AG04449 (cell line): ENCODE measurements at regions of chr1 and their contacts with region 1.

Region 1: GRCh38 chr1:157369808-157370521 is 182.3 kb downstream of the FCRL5 start:
- DNase-seq: no peak
- H3K4me3 ChIP-seq: no peak overlapping the region
- CTCF ChIP-seq: peak; percentile 66

Region 2: DNA sequence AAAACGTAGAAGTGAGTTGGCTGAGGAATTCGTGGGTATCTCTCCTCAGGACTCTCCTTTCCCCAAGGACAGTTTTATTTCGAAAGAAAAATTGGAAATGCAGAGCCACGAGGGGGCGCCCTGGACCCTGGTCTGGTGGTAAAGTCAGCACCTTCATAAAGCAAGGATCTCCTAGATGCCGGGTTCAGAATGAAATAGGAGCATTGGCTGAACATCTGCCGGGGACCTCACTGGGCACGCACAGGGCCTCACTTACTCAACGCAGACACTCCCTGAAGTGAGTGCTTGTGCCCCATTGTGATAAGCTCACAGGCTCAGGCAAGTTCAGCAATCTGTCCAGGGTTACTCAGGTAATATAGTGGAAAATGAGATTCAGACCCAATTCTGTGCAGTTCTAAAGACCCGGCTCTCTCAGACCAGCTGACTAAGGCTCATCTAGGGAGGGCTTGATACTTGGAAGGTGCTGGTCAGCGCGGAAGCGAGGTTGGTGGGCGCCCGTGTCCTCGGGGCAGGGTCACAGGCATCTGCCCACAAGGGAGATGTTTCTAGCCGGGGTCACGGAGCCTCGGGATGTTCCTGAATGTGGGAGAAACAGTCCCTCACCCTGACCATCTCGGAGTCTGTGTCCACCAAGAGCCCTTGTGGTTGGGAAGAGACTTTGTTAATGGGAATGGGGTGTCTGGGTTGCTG is 176.1 kb before region 1 on chr1:
- CTCF ChIA-PET with region 1: interaction called, 11 read pairs
- POLR2A ChIA-PET with region 1: no interaction called
- DNase-seq: no peak
- H3K4me3 ChIP-seq: no peak overlapping the region
- CTCF ChIP-seq: peak; percentile 75

Region 3: DNA sequence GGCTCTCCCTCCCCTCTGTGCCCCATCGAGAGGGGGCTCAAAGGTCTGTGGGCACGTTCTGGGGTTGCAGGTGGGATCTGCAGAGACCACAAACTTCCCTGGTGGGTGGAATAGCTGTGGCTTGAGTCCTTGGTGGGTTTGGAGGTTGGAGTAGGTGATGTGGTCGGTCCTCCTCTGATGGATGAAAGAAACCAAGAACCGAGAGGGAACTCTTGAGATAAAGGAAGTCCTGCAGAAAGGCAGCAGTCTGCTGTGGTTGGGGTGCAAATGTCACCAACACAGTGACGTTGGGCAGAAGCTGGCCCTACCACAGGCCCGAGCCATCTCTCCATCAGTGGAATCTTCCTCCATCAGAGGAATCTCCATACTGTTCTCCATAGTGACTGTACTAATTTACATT is 10.6 kb after region 1 on chr1:
- CTCF ChIA-PET with region 1: interaction called, 17 read pairs
- POLR2A ChIA-PET with region 1: no interaction called
- DNase-seq: no peak
- H3K4me3 ChIP-seq: no peak overlapping the region
- CTCF ChIP-seq: no peak

Region 4: GRCh38 chr1:157490467-157491165 is 120.7 kb after region 1 on chr1:
- CTCF ChIA-PET with region 1: interaction called, 53 read pairs
- POLR2A ChIA-PET with region 1: no interaction called
- DNase-seq: no peak
- H3K4me3 ChIP-seq: no peak overlapping the region
- CTCF ChIP-seq: peak; percentile 72

Region 5: GRCh38 chr1:157496121-157496526 is 126.2 kb after region 1 on chr1:
- CTCF ChIA-PET with region 1: interaction called, 46 read pairs
- POLR2A ChIA-PET with region 1: no interaction called
- DNase-seq: no peak
- H3K4me3 ChIP-seq: no peak overlapping the region
- CTCF ChIP-seq: peak; percentile 69

Region 6: GRCh38 chr1:157646144-157646543 is 276.2 kb after region 1 on chr1:
- CTCF ChIA-PET with region 1: no interaction called
- POLR2A ChIA-PET with region 1: no interaction called
- DNase-seq: no peak
- H3K4me3 ChIP-seq: no peak overlapping the region
- CTCF ChIP-seq: no peak

Region 7: DNA sequence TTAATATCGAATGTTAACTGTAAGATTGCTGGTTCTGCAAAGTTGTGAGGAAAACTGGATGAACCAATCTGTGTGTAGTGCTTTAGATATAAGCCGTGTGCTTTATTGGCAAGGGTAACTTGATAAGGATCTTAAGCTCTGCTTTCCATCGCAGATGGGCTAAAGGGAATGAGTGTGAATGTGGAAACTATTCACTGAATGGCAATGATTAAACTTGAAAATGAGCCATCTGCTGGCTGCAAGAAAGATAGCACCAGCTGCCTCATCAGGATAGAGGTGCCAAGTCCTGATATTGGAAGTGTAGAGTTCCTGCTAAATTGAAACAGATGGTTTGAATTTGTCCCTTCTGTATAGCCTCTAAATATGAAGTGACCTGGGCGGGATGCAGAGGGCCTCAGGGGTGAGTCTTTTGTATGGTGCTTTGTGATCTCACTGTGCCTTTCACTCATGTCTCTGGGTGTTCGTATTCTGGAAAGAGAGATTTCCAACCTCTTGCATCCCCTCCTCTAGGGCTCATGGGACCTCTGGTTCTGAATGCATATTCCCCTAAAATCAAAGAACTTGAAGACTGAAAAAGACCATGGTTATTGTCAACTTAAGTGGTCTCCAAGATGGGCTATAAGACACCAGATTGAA is 321.4 kb after region 1 on chr1:
- CTCF ChIA-PET with region 1: interaction called, 12 read pairs
- POLR2A ChIA-PET with region 1: no interaction called
- DNase-seq: peak; percentile 4
- H3K4me3 ChIP-seq: no peak overlapping the region
- CTCF ChIP-seq: peak; percentile 45